Naive thymus-derived CD8-positive, alpha-beta T cell (primary cell): ENCODE measurements at regions of chr13 and their contacts with region 1.

Region 1: GRCh38 chr13:102596147-102597028 is at the start of gene TPP2:
- DNase-seq: peak; percentile 94 to 99 (median 97)
- ATAC-seq: peak; percentile 84 to 85
- H3K4me3 Mint-ChIP-seq: peak within 1 kb of the TSS; percentile 94 to 99 (median 97)
- H3K27ac Mint-ChIP-seq: peak within 1 kb of the TSS; percentile 93 to 100 (median 100)
- H3K4me1 Mint-ChIP-seq: peaks cover 40 to 72% (median 58%) of the 10 kb centered on the region in 4 donors
- H3K27me3 Mint-ChIP-seq: no peaks in the 10 kb centered on the region
- polyA plus RNA-seq, gene TPP2: 52.3 to 64.7 (median 61.1) TPM

Region 2: GRCh38 chr13:102580552-102581169 is 15.7 kb before region 1 on chr13:
- POLR2A ChIA-PET with region 1: interaction called, 13 read pairs
- DNase-seq: peak in 8 of 10 donors; percentile 8 to 74 (median 45)
- ATAC-seq: peak; percentile 85 to 88
- H3K4me3 Mint-ChIP-seq: no peak overlapping the region
- H3K27ac Mint-ChIP-seq: no peak overlapping the region
- H3K4me1 Mint-ChIP-seq: peaks cover 6 to 20% (median 10%) of the 10 kb centered on the region in 4 donors
- H3K27me3 Mint-ChIP-seq: peaks cover 0 to 7% (median 2%) of the 10 kb centered on the region in 5 donors

Region 3: DNA sequence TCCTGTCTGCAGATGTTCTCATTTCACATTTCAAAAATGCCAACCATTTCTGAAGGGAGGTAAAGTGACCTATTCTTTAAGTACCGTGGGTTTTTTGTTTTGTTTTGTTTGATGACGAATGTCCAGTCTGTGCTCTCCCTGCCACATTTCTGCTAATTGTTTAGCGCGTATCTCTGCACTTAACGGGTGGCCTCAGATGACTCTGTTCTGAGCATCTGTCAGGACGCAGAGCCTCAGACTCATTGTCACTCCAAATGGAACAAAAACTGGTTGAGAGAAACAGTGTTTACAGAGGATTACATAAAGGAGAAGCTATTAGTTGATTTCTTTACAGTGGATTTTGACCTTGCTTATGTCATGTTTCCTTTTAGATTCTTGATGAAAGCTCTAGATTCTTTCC is 24.1 kb after region 1 on chr13:
- POLR2A ChIA-PET with region 1: interaction called, 13 read pairs
- DNase-seq: no peak
- ATAC-seq: no peak
- H3K4me3 Mint-ChIP-seq: no peak overlapping the region
- H3K27ac Mint-ChIP-seq: peak overlapping the region in 4 of 10 donors; percentile 12 to 75 (median 30)
- H3K4me1 Mint-ChIP-seq: peaks cover 0 to 17% (median 13%) of the 10 kb centered on the region in 4 donors
- H3K27me3 Mint-ChIP-seq: no peaks in the 10 kb centered on the region

Region 4: GRCh38 chr13:102718746-102719145 is 122.4 kb after region 1 on chr13:
- POLR2A ChIA-PET with region 1: no interaction called
- DNase-seq: no peak
- ATAC-seq: no peak
- H3K4me3 Mint-ChIP-seq: no peak overlapping the region
- H3K27ac Mint-ChIP-seq: peak overlapping the region in 2 of 10 donors; percentile 11 to 78
- H3K4me1 Mint-ChIP-seq: no peaks in the 10 kb centered on the region
- H3K27me3 Mint-ChIP-seq: peaks cover 0 to 7% (median 0%) of the 10 kb centered on the region in 5 donors

Region 5: GRCh38 chr13:102800145-102801041 is 204.0 kb after region 1 on chr13:
- POLR2A ChIA-PET with region 1: interaction called, 15 read pairs
- DNase-seq: peak; percentile 70 to 89 (median 80)
- ATAC-seq: peak; percentile 83 to 84
- H3K4me3 Mint-ChIP-seq: peak overlapping the region; percentile 85 to 95 (median 90)
- H3K27ac Mint-ChIP-seq: peak overlapping the region; percentile 9 to 84 (median 73)
- H3K4me1 Mint-ChIP-seq: peaks cover 11 to 34% (median 28%) of the 10 kb centered on the region in 4 donors
- H3K27me3 Mint-ChIP-seq: peaks cover 0 to 10% (median 4%) of the 10 kb centered on the region in 5 donors